WTC11 (cell line): ENCODE measurements at regions of chr7 and their contacts with region 1.

Region 1: GRCh38 chr7:157013602-157014549 is 3.4 kb upstream of the MNX1 start:
- DNase-seq: peak; percentile 46
- ATAC-seq: peak; percentile 35
- H3K4me3 Mint-ChIP-seq: peak overlapping the region; percentile 18; the same call in 1 of the 2 replicates
- H3K27ac Mint-ChIP-seq: no peak overlapping the region
- H3K4me1 Mint-ChIP-seq: peaks cover 62% of the 10 kb centered on the region
- H3K27me3 Mint-ChIP-seq: peaks cover 90% of the 10 kb centered on the region
- CTCF ChIP-seq: no peak

Region 2: DNA sequence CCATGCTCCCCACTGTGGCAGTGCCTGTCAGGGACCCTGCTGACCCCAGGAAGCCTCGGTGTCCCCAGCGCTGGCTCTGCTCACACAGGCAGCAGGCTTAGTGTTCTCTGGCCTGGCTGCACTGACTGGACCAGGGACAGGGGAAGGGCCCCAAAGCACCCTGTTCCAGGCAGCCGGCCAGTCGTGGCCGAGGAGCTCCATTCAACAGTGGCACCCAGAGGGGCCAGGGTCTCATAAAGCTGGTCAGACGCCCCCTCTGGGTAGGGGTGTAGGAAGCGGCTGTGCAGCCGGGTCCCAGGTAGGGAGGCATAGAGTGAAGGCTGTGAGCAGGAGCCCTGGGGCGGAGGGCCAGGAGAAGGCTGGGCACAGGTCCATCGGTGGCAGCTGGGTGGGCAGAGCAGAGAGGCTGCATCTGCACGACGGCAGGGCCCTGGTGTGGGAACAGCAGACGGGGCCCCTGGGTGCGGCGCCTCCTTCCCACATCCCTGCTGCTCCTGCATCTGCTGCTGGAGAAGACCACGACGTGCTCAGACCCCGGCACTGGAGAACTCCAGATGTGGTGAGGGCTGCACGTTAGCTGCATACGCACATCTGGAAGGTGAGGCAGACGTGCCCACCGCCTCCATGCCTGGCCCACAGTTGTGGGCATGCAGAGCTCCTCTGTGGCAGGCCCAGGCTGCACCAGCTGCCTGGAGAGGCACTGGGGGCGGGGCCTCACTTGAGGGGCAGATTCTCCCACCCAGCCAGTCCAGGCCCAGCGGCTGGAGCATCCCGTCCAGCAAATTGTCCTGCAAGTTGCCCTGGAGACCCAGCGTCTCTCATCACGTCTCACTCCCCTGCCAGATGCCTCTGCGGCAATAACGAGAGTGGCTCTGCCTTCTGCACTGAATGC is 28.5 kb before region 1 on chr7:
- CTCF ChIA-PET with region 1: interaction called, 12 read pairs
- POLR2A ChIA-PET with region 1: no interaction called
- DNase-seq: no peak
- ATAC-seq: peak; percentile 11; the same call in 1 of the 2 replicates
- H3K4me3 Mint-ChIP-seq: no peak overlapping the region
- H3K27ac Mint-ChIP-seq: no peak overlapping the region
- H3K4me1 Mint-ChIP-seq: no peaks in the 10 kb centered on the region; the same call in 1 of the 2 replicates
- H3K27me3 Mint-ChIP-seq: no peaks in the 10 kb centered on the region
- CTCF ChIP-seq: no peak

Region 3: DNA sequence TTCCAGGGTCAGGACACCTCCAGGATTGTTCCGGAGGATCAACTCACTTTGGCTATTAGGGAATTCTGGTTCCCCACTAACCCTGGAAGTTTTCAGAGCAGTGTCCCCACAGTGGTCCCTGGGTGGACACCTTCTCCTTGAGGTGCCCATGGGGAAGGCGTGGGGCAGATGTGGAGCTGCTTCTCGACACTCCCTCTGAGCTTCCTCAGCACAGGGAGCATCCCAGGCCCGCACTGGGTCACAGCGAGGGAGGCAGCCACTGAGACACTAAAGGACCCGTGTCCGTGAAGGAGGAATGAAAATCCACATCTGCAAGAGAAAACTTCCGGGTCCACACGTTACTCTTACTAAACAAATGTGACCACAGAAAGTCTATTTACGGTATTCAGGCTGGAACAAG is 44.8 kb after region 1 on chr7:
- CTCF ChIA-PET with region 1: no interaction called
- POLR2A ChIA-PET with region 1: no interaction called
- DNase-seq: no peak
- ATAC-seq: no peak
- H3K4me3 Mint-ChIP-seq: no peak overlapping the region
- H3K27ac Mint-ChIP-seq: no peak overlapping the region
- H3K4me1 Mint-ChIP-seq: no peaks in the 10 kb centered on the region
- H3K27me3 Mint-ChIP-seq: peaks cover 8% of the 10 kb centered on the region
- CTCF ChIP-seq: no peak